Testis (tissue), 5 donors: ENCODE measurements at regions of chr19 and their contacts with region 1.

Region 1: GRCh38 chr19:45770192-45771101 is 1.4 kb upstream of the SIX5 start:
- DNase-seq: peak; percentile 99
- H3K4me3 ChIP-seq: peak overlapping the region; percentile 69 to 71
- H3K27ac ChIP-seq: peak overlapping the region; percentile 89 to 95
- H3K4me1 ChIP-seq: peaks cover 24% of the 10 kb centered on the region
- H3K27me3 ChIP-seq: no peaks in the 10 kb centered on the region
- CTCF ChIP-seq: peak; percentile 91 to 97 (median 95)
- POLR2A ChIP-seq: no peak

Region 2: DNA sequence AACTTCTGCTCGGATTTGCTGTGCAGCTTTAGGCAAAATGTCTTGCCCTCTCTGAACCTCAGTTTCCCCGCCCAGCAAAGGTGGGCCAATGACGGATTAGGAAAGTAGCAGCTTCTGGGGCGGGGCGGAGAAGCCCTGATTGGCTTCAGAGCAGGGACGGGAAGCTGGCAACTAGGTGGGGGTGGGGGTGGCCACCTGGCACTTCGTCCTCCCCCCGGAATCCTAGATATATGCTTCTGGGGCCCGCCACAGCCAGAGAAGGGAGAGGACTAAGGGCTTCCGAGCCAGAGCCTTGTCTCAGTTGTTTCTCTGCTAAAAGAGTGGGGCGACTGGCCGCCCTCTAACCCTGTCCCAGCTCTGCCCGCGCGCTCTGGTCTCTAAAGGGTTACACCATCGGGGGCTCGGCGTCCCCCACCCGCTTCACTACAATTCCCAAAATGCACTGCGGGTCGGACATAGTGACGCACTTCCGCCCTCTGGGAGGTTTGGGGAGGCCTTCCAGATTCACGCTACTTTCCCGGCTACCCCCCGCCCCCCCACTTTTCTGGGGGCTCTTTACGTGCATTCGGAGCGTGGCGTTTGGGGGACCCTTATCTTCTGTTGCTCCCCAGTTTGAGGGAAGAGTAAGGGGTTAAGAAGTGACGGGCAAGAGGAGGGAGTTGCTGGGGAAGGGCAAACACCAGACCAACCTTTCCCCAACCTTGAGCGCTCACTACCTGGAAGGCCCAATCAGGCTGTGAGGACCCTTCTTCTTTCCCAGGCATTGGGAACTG is 116.2 kb after region 1 on chr19:
- intact Hi-C with region 1: loop called (anchors 10 kb)
- DNase-seq: peak; percentile 93
- H3K4me3 ChIP-seq: peak overlapping the region; percentile 75 to 84
- H3K27ac ChIP-seq: peak overlapping the region; percentile 86 to 87
- H3K4me1 ChIP-seq: peaks cover 35% of the 10 kb centered on the region
- H3K27me3 ChIP-seq: no peaks in the 10 kb centered on the region
- CTCF ChIP-seq: no peak
- POLR2A ChIP-seq: no peak

Region 3: DNA sequence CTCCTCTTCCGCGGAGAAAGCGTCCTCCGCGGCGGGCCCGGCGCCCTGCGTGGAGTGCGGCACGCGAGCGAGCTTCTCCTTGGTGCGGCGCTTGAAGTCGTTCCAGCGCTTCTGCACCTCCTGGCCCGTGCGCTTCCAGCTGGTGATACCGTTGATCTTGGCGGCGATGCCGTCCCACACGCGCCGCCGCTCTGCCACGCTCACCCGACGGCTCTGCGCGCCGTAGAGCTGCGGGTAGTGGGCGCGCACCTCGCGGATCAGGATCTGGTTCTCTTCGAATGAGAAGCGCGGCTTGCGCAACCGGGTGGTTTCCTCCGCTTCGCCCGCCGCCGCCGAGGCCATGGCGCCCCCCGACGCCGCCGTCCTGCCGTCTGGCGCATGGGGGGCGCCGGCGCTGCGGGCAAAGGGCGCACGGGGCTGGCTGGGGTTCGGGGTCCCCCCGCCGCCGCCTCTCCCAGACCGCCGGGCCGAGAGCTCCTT is 131.0 kb after region 1 on chr19:
- intact Hi-C with region 1: no loop called
- DNase-seq: no peak
- H3K4me3 ChIP-seq: peak overlapping the region; percentile 67 to 82
- H3K27ac ChIP-seq: no peak overlapping the region
- H3K4me1 ChIP-seq: peaks cover 14% of the 10 kb centered on the region
- H3K27me3 ChIP-seq: no peaks in the 10 kb centered on the region
- CTCF ChIP-seq: no peak
- POLR2A ChIP-seq: no peak